HEK293 (cell line): ENCODE measurements at regions of chr1 and their contacts with region 1.

Region 1: GRCh38 chr1:179809506-179810366 is 66.6 kb downstream of the FAM163A start:
- H3K4me3 ChIP-seq: no peak overlapping the region
- H3K27ac ChIP-seq: no peak overlapping the region
- H3K4me1 ChIP-seq: no peaks in the 10 kb centered on the region
- CTCF ChIP-seq: peak; percentile 81

Region 2: GRCh38 chr1:179706339-179706941 is 103.3 kb before region 1 on chr1:
- CTCF ChIA-PET with region 1: interaction called, 345 read pairs
- POLR2A ChIA-PET with region 1: interaction called, 3 read pairs
- H3K4me3 ChIP-seq: no peak overlapping the region
- H3K27ac ChIP-seq: no peak overlapping the region
- H3K4me1 ChIP-seq: no peaks in the 10 kb centered on the region
- CTCF ChIP-seq: peak; percentile 45; the same call in 1 of the 2 replicates

Region 3: GRCh38 chr1:179770884-179771502 is 38.7 kb before region 1 on chr1:
- CTCF ChIA-PET with region 1: interaction called, 17 read pairs
- POLR2A ChIA-PET with region 1: no interaction called
- H3K4me3 ChIP-seq: no peak overlapping the region
- H3K27ac ChIP-seq: no peak overlapping the region
- H3K4me1 ChIP-seq: no peaks in the 10 kb centered on the region
- CTCF ChIP-seq: no peak

Region 4: GRCh38 chr1:179794669-179795068 is 15.1 kb before region 1 on chr1:
- CTCF ChIA-PET with region 1: interaction called, 89 read pairs
- POLR2A ChIA-PET with region 1: no interaction called
- H3K4me3 ChIP-seq: no peak overlapping the region
- H3K27ac ChIP-seq: no peak overlapping the region
- H3K4me1 ChIP-seq: no peaks in the 10 kb centered on the region
- CTCF ChIP-seq: no peak

Region 5: GRCh38 chr1:179840107-179840506 is 30.4 kb after region 1 on chr1:
- CTCF ChIA-PET with region 1: interaction called, 22 read pairs
- POLR2A ChIA-PET with region 1: no interaction called
- H3K4me3 ChIP-seq: no peak overlapping the region
- H3K27ac ChIP-seq: no peak overlapping the region
- H3K4me1 ChIP-seq: no peaks in the 10 kb centered on the region
- CTCF ChIP-seq: no peak

Region 6: DNA sequence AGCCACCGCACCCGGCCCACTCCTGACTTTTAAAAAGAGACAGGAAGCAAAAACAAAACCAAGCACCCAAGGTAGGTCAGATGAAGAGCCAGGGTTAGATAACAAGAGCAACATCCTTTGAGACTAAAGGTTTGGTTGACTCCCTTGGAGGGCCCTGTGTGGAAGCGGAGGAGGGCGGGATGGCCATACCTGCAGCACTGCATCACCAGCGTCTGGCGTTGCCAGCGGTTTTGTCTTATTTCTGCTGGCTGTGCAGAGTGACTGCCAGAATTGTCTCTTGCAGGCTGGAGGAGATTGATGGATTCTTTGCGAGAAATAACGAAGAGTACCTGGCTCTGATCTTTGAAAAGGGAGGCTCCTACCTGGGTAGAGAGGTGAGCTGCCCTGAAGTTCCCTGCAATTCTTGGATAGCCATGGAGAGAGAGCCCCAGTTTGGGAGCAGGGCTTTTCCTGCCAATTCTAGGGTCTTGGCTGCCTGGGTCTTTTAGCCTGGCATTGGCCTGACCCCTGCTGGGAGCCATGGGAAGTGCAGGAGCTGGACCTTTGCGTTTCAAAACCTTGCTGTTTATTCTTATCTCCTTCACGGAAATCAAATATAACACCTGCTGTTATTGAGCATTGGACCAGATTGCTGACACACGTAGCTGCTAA is 368.9 kb after region 1 on chr1:
- CTCF ChIA-PET with region 1: interaction called, 38 read pairs
- POLR2A ChIA-PET with region 1: no interaction called
- H3K4me3 ChIP-seq: no peak overlapping the region
- H3K27ac ChIP-seq: no peak overlapping the region
- H3K4me1 ChIP-seq: no peaks in the 10 kb centered on the region
- CTCF ChIP-seq: peak; percentile 55